ENCODE measurements at regions of chr13 and their contacts with region 1.

Region 1: DNA sequence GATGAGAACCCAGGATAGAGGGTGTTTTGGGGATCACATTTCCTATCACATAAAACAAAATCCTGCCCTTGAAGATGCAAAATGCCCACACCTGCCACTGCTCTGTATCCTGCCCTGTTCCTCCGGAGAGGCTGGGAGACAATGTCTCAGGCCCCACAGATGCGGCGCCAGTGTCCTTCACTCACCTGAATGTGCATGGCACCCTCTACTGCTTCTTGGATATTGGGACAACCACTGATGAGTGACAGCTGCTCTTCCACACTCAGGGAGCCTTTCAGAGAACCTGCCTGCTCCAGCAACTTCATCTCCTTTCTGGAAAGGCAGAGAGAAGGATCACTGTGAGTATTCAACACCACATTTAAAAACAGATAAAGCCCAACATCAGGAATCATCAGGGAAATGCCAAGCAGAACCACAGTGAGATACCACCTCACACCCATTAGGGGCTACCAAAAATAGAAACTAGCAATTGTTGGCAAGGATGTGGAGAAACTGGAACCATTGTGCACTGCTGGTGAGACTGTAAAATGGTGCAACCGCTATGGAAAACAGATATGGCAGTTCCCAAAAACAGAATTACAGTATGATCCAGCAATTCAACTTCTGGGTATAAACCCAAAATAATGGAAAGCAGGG is 36.4 kb downstream of the CRYL1 start:
- DNase-seq: peak; percentile 85
- ATAC-seq: peak; percentile 97
- H3K4me3 Mint-ChIP-seq: no peak overlapping the region
- H3K27ac Mint-ChIP-seq: no peak overlapping the region
- H3K4me1 Mint-ChIP-seq: peaks cover 8% of the 10 kb centered on the region
- H3K27me3 Mint-ChIP-seq: no peaks in the 10 kb centered on the region

Region 2: DNA sequence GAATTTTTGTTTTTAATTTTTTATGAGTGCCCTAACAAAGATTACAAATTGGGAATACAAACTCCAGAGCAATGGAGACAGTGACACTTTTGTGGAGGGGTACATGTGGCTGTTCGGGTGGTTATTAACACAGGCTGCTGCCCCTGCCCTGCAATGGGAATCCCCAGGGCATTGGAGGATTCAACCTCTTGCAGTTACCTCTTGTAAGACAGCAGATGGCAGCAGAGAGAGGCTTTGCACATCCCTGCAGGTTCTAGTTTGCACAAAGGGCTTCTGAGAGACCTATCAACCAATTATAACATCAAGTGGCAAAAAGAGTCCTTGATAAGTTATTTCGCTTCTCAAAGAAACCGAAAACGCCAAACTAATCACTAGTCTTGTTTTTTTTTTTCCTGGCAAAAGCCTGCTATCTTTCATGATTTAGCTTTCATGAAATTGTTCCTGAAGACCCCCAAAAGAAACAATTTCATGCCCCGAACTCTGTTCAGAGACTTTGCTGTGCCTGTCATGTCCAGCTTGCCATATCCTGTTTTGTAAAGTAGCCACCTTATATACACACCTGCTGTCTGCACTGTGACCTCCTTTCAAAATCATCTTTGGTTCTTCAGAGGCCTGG is 307.0 kb before region 1 on chr13:
- CTCF ChIA-PET with region 1: interaction called, 31 read pairs
- POLR2A ChIA-PET with region 1: no interaction called
- intact Hi-C with region 1: loop called (anchors 1 kb)
- DNase-seq: peak; percentile 64
- ATAC-seq: peak; percentile 98
- H3K4me3 Mint-ChIP-seq: no peak overlapping the region
- H3K27ac Mint-ChIP-seq: no peak overlapping the region
- H3K4me1 Mint-ChIP-seq: peaks cover 3% of the 10 kb centered on the region
- H3K27me3 Mint-ChIP-seq: peaks cover 31% of the 10 kb centered on the region

Region 3: DNA sequence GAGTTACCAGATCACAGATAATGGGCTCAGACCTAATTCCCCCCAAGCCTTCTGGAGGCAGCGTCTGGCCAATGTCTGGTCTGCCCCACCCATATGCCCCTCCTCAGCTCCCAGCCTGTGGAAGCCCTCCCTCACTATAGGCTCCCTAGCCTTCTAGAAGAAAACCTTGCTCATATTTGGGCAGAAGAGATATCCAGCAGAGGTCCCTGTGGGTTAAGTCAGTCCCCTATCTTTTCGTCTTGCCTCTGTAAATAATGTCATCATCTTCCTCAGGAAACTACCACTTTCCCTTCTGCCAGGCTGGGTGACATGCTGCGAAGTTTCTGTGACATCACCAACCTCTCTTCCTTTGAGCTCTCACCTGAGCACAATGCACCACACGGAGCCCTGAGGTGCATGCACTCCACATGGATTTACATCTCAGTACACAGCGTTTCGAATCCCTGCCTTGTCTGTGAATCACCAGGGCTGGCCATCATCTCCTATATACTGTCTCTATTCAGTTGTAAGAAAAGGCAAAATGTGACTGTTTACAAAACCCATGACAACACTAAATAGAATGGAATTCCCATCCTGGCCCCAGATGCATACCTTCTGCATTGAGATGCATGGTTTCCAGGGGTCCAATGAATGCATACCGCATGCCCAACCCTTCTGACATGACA is 76.5 kb before region 1 on chr13:
- CTCF ChIA-PET with region 1: interaction called, 3 read pairs
- POLR2A ChIA-PET with region 1: no interaction called
- intact Hi-C with region 1: loop called in 1 of 2 experiments (anchors 1 kb)
- DNase-seq: peak; percentile 59
- ATAC-seq: peak; percentile 69
- H3K4me3 Mint-ChIP-seq: no peak overlapping the region
- H3K27ac Mint-ChIP-seq: peak overlapping the region; percentile 77
- H3K4me1 Mint-ChIP-seq: peaks cover 22% of the 10 kb centered on the region
- H3K27me3 Mint-ChIP-seq: peaks cover 3% of the 10 kb centered on the region

Region 4: DNA sequence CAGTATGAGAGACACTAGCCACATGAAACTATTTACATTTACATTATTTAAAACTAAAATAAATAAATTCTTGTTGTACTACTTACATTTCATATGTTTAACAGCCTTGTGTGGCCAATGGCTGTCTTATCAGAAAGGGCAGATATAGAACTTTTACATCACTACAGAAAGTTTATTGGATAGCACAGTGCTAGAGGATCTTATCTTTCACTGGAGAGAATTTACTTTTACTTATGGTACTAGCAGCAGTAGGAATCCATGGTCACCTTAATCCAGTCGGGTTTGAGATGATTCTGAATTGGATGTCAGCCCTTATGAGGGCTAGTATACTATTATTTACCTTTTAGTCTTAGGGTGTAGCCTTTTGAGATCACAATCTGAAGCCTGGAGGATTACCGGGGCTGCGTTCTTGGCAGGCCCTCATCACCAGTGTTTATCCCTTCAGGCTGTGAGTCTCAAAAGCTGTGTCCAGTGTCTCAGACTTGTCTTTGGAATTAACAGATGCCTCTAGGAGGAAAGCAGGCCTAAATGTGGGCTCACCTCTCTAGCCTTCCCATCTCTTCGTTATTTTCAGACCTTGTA is 99.3 kb after region 1 on chr13:
- CTCF ChIA-PET with region 1: no interaction called
- POLR2A ChIA-PET with region 1: no interaction called
- intact Hi-C with region 1: no loop called
- DNase-seq: no peak
- ATAC-seq: no peak
- H3K4me3 Mint-ChIP-seq: no peak overlapping the region
- H3K27ac Mint-ChIP-seq: no peak overlapping the region
- H3K4me1 Mint-ChIP-seq: no peaks in the 10 kb centered on the region
- H3K27me3 Mint-ChIP-seq: no peaks in the 10 kb centered on the region